ENCODE measurements at regions of chr3 and their contacts with region 1.

Region 1: DNA sequence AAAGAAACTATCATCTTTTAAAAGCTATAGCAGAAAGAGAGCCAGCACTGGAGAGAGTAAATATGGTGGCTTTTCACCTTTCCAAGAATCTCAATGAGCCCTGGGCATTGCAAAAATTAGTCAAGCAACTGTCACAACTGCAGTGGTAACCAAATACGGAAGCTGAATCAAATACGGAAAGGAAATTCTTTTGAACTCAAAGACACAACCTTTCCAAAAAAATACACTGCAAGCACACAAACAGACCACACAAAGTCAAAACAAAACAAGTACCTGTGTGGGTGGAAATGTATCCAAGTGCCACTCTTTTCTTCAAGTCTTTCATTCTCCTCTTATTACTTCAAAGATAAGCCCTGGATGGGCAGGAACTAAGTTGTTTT is 17.6 kb downstream of the VGLL4 start:
- DNase-seq: peak in 2 of 9 donors; percentile 16 to 30
- ATAC-seq: peak; percentile 34
- H3K4me3 ChIP-seq: no peak overlapping the region
- H3K4me3 Mint-ChIP-seq: peak overlapping the region in 9 of 10 donors; percentile 14 to 86 (median 73)
- H3K27ac ChIP-seq: no peak overlapping the region
- H3K27ac Mint-ChIP-seq: peak overlapping the region in 7 of 9 donors; percentile 14 to 97 (median 90)
- H3K4me1 ChIP-seq: peaks cover 18 to 38% of the 10 kb centered on the region in 2 donors
- H3K4me1 Mint-ChIP-seq: peaks cover 36 to 87% (median 77%) of the 10 kb centered on the region in 7 donors
- H3K27me3 ChIP-seq: no peaks in the 10 kb centered on the region
- H3K27me3 Mint-ChIP-seq: no peaks in the 10 kb centered on the region

Region 2: DNA sequence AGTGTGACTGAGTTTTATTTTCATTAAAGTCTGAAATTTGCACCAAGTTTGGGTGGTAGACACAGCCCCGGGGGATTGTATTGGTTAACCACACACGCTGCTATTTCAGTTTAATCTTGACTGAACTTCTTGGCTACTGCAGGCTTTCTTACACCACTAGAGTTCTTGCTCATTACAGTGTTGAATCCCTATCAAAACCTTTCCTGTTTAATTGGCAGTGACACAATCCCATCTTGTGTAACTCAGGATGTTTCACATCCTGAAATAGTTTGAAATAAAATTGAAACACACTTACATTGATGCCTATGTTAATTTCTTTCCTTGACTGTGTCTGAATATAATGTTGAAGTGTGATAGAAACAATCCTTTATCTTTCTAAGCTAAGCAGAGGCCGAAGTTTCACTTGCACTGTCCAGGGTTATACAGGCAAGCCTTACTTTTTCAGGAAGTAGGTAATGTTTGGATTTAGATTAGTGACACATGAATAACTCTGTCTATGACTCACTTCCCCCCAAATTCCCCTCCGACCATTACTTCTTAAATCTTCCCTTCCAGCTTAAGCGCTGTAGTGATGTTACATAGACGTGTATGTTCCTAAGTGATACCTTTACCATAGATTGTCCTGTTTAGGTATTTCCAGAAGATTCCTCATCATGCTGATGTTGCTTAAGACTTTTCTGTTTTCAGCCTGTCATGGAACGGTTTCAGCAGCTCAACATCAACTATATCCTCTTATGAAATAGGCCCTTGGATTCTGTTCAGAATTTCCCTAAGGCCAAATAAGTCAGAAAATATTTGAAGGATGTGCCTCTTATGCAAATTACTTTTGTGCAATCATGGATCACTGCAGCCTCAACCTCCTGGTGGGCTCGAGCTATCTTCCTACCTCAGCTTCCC is 337.0 kb before region 1 on chr3:
- CTCF ChIA-PET with region 1: interaction called, 4 read pairs
- POLR2A ChIA-PET with region 1: no interaction called
- intact Hi-C with region 1: loop called in 1 of 2 experiments (anchors 1 kb)
- DNase-seq: no peak
- ATAC-seq: peak; percentile 77
- H3K4me3 ChIP-seq: no peak overlapping the region
- H3K4me3 Mint-ChIP-seq: peak overlapping the region in 2 of 10 donors; percentile 16 to 32
- H3K27ac ChIP-seq: peak overlapping the region; percentile 25
- H3K27ac Mint-ChIP-seq: peak overlapping the region; percentile 75 to 95 (median 82)
- H3K4me1 ChIP-seq: peaks cover 19 to 39% of the 10 kb centered on the region in 2 donors
- H3K4me1 Mint-ChIP-seq: peaks cover 42 to 63% (median 55%) of the 10 kb centered on the region in 7 donors
- H3K27me3 ChIP-seq: no peaks in the 10 kb centered on the region
- H3K27me3 Mint-ChIP-seq: no peaks in the 10 kb centered on the region

Region 3: DNA sequence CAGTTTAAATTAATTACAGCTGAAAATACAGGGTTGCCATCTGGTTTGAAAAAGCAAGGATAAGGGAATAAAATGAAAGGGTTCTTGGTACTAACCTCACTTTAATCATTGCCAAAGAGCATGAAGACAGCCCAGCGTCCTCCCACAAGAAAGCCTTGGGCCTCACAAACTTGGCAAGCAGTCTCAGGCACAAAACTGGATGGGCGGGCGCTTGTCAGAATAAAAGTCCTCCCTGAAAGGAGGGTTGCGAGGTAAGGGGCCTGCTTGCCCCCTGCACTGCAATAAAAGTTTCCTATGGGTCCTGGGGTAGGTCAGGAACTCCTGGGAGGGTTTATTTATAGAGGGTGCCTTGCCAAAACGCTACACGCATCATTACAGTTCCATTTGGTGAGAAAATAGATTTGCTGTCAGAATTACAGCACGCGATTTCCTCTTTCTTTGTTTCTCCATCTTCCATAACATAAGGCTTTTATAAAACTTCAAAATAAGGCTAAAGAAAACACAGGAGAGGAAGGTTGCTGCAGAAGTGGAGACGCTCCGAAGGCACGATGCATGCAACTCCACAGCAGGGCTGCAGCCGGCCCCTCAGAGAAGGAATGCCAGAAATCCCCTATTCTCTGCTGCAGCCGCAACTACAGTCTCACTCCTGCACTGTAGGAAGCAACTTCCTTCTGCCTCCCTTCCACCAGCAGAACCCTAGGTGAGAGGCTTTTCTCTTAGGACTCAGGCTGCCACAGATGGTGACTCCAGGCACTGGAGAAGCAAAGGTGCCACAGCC is 43.7 kb before region 1 on chr3:
- CTCF ChIA-PET with region 1: no interaction called
- POLR2A ChIA-PET with region 1: no interaction called
- intact Hi-C with region 1: loop called in 1 of 2 experiments (anchors 1 kb)
- DNase-seq: peak in 6 of 9 donors; percentile 8 to 24 (median 17)
- ATAC-seq: peak; percentile 67
- H3K4me3 ChIP-seq: peak overlapping the region; percentile 28
- H3K4me3 Mint-ChIP-seq: peak overlapping the region; percentile 61 to 94 (median 83)
- H3K27ac ChIP-seq: peak overlapping the region; percentile 5
- H3K27ac Mint-ChIP-seq: peak overlapping the region; percentile 12 to 87 (median 79)
- H3K4me1 ChIP-seq: peaks cover 0 to 15% of the 10 kb centered on the region in 2 donors
- H3K4me1 Mint-ChIP-seq: peaks cover 28 to 86% (median 81%) of the 10 kb centered on the region in 7 donors
- H3K27me3 ChIP-seq: no peaks in the 10 kb centered on the region
- H3K27me3 Mint-ChIP-seq: no peaks in the 10 kb centered on the region

Region 4: GRCh38 chr3:13119471-13120220 is 1493.6 kb after region 1 on chr3:
- CTCF ChIA-PET with region 1: no interaction called
- POLR2A ChIA-PET with region 1: no interaction called
- intact Hi-C with region 1: no loop called
- DNase-seq: no peak
- ATAC-seq: no peak
- H3K4me3 ChIP-seq: no peak overlapping the region
- H3K4me3 Mint-ChIP-seq: no peak overlapping the region
- H3K27ac ChIP-seq: no peak overlapping the region
- H3K27ac Mint-ChIP-seq: no peak overlapping the region
- H3K4me1 ChIP-seq: no peaks in the 10 kb centered on the region
- H3K4me1 Mint-ChIP-seq: no peaks in the 10 kb centered on the region
- H3K27me3 ChIP-seq: no peaks in the 10 kb centered on the region
- H3K27me3 Mint-ChIP-seq: peaks cover 0 to 5% (median 0%) of the 10 kb centered on the region in 5 donors